MCF 10A (cell line): ENCODE measurements at regions of chr2 and their contacts with region 1.

Region 1: GRCh38 chr2:174341286-174341994 is 6.7 kb downstream of the SP9 start:
- DNase-seq: peak; percentile 75
- H3K4me3 Mint-ChIP-seq: peak overlapping the region; percentile 2
- H3K27ac Mint-ChIP-seq: no peak overlapping the region
- H3K4me1 Mint-ChIP-seq: peaks cover 11% of the 10 kb centered on the region
- H3K27me3 Mint-ChIP-seq: no peaks in the 10 kb centered on the region
- CTCF ChIP-seq: peak; percentile 97

Region 2: GRCh38 chr2:173402405-173402974 is 939.0 kb before region 1 on chr2:
- CTCF ChIA-PET with region 1: interaction called, 5 read pairs
- POLR2A ChIA-PET with region 1: interaction called, 3 read pairs
- intact Hi-C with region 1: loop called (anchors 2 kb)
- DNase-seq: peak; percentile 87
- H3K4me3 Mint-ChIP-seq: peak overlapping the region; percentile 6
- H3K27ac Mint-ChIP-seq: no peak overlapping the region
- H3K4me1 Mint-ChIP-seq: peaks cover 11% of the 10 kb centered on the region
- H3K27me3 Mint-ChIP-seq: peaks cover 64% of the 10 kb centered on the region
- CTCF ChIP-seq: peak; percentile 86

Region 3: DNA sequence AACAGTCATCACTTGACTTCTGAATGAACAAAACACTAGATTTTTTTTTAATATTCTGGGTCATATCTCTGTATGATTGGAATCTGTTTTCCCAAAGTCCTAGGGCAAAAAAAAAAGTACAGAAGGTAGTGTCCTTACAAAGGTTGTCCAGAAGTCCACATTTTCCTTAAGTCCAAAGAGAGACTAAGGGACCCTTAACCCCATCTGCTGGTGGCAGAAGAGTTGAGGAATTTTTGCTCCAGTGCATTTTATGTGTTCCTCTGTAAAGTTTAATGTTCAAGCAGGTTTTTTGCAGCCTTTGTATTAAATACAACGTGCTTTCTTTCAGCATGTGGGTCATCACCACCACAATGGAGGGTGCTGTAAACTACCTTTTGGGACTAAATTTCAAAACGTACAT is 592.1 kb before region 1 on chr2:
- CTCF ChIA-PET with region 1: interaction called, 3 read pairs
- POLR2A ChIA-PET with region 1: no interaction called
- intact Hi-C with region 1: loop called (anchors 1 kb)
- DNase-seq: peak; percentile 44
- H3K4me3 Mint-ChIP-seq: no peak overlapping the region
- H3K27ac Mint-ChIP-seq: no peak overlapping the region
- H3K4me1 Mint-ChIP-seq: no peaks in the 10 kb centered on the region
- H3K27me3 Mint-ChIP-seq: no peaks in the 10 kb centered on the region
- CTCF ChIP-seq: peak; percentile 45

Region 4: DNA sequence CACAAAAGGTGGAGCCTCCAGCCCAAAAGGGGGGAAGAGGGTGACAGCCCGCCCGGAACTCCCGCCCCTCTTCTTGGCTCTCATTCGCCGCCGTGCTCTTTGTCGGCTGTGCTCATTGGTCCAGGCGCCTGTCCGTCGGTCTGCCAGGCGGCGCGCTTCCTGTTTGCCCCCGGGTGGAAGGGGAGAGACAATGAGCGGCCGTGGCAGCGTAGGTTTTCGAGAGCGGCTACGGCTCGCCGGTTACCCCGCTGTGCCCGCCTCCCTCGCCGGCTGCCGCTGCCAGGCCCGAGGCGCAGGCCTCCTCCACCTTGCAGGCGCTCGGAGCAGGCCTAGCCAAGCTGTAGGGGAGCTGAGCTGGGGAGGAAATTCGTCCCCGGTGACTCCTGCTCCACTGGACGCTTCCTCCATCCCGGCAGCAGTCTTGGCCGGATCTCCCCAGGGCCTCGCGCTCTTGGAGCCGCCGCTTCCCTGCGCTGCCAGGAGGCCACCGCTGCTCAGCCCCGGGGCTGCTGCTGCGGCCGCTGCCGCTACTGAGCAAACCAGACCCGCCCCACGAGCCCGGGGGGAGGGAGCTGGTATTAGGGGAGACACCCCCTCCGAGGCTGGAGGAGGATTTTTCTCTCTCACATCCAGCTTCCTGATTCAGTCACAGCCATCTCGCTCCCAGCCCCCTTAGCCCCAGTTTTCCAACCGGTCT is 376.0 kb before region 1 on chr2 and contains the start of gene SP3:
- CTCF ChIA-PET with region 1: interaction called, 3 read pairs
- POLR2A ChIA-PET with region 1: no interaction called
- intact Hi-C with region 1: loop called (anchors 10 kb)
- DNase-seq: peak; percentile 97
- H3K4me3 Mint-ChIP-seq: peak within 1 kb of the TSS; percentile 87
- H3K27ac Mint-ChIP-seq: peak within 1 kb of the TSS; percentile 87
- H3K4me1 Mint-ChIP-seq: peaks cover 12% of the 10 kb centered on the region
- H3K27me3 Mint-ChIP-seq: no peaks in the 10 kb centered on the region
- CTCF ChIP-seq: no peak
- total RNA-seq, gene SP3: 62.1 and 73.8 TPM in 2 replicates

Region 5: GRCh38 chr2:174158003-174158402 is 183.4 kb before region 1 on chr2:
- CTCF ChIA-PET with region 1: interaction called, 8 read pairs
- POLR2A ChIA-PET with region 1: no interaction called
- intact Hi-C with region 1: loop called (anchors 1 kb)
- DNase-seq: peak; percentile 65
- H3K4me3 Mint-ChIP-seq: no peak overlapping the region
- H3K27ac Mint-ChIP-seq: no peak overlapping the region
- H3K4me1 Mint-ChIP-seq: peaks cover 45% of the 10 kb centered on the region
- H3K27me3 Mint-ChIP-seq: no peaks in the 10 kb centered on the region
- CTCF ChIP-seq: peak; percentile 29

Region 6: GRCh38 chr2:174717273-174717672 is 375.8 kb after region 1 on chr2:
- CTCF ChIA-PET with region 1: no interaction called
- POLR2A ChIA-PET with region 1: no interaction called
- intact Hi-C with region 1: no loop called
- DNase-seq: no peak
- H3K4me3 Mint-ChIP-seq: no peak overlapping the region
- H3K27ac Mint-ChIP-seq: no peak overlapping the region
- H3K4me1 Mint-ChIP-seq: no peaks in the 10 kb centered on the region
- H3K27me3 Mint-ChIP-seq: no peaks in the 10 kb centered on the region
- CTCF ChIP-seq: no peak